Cardiac septum (tissue), 1 donor: ENCODE measurements at regions of chr12 and their contacts with region 1.

Region 1: GRCh38 chr12:14769969-14770495 is 33.2 kb downstream of the WBP11 start:
- DNase-seq: peak; percentile 92

Region 2: GRCh38 chr12:14394317-14395073 is 375.5 kb before region 1 on chr12:
- intact Hi-C with region 1: loop called (anchors 10 kb)
- DNase-seq: no peak

Region 3: GRCh38 chr12:14665354-14666348 is 104.4 kb before region 1 on chr12:
- intact Hi-C with region 1: no loop called
- DNase-seq: no peak

Region 4: DNA sequence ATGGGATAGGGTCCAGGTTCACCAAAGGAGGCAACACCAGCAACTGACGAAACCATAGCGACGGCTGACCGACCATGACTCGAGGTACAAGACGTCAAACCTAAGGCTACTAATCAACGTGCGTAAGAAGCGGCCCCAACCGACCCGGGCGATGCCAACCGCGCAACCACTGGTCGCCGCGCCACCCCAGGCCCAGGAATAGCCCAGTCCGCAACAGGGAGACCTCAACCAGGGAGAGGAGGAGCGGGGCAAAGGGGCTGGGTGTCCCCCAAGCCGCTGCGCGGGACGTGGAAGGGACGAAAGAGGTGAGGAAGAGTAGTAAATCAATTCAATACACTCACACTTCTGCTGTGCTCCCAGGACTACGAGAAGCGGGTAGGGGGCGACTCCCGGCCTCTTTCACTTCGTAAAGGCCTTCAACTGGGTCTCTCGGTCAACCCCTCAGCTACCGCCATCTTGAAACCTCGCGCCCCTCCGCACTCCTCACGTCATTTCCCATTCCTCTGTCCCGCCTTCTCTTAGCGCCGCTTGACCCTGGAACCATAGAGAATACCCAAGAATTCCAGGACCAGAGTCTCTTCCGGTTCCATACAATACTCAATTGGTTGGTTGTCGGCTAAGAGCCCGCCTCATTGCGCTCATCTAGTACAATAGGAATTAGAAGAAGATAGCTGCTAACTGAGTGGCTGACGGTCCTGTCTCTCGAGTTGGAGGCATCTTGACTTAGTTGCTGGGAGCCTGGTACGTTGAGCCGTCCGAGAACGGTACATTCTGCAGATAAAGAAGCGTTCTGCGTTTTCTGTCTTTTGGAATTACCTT is 33.2 kb after region 1 on chr12 and contains the starts of genes C12orf60 and WBP11:
- intact Hi-C with region 1: loop called (anchors 1 kb)
- DNase-seq: peak; percentile 95
- total RNA-seq, gene C12orf60: 2.5 TPM
- total RNA-seq, gene WBP11: 51.7 TPM

Region 5: DNA sequence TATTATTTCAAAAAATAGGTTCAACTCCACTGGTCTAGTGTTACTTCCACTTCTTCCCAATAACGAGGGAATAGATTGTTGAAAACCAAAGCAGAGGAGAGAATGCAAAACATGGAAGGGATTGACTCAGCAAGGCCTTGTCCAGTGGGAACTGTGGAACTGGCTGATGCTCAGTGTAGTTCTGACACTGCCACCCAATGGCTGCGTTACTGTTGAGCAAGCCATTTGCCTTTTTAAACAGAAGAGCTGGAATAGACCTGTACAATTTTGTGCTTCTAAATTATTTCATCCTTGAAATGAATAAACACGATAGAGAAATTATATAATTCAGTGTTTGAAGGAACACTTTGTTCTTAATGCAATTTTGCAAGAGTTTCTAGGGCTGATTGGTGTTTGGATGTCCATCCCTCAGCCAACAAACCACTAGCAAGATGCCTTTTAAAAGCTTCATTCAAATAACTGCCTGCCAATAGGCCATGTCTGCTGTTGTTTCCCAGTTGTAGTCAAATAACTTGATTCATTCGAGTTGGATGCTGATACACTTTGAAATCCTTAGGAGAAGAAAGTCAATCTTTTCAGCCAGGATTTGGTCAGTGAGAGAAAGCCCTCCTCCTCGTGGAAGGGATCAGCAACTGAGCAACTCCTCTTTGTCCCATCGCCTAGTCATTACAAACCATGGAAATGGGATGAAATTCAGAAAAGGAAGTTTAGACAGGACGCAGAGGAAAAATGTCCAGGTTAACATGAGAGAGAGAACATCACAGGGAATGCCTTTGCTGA is 122.9 kb after region 1 on chr12:
- intact Hi-C with region 1: loop called (anchors 10 kb)
- DNase-seq: no peak

Region 6: DNA sequence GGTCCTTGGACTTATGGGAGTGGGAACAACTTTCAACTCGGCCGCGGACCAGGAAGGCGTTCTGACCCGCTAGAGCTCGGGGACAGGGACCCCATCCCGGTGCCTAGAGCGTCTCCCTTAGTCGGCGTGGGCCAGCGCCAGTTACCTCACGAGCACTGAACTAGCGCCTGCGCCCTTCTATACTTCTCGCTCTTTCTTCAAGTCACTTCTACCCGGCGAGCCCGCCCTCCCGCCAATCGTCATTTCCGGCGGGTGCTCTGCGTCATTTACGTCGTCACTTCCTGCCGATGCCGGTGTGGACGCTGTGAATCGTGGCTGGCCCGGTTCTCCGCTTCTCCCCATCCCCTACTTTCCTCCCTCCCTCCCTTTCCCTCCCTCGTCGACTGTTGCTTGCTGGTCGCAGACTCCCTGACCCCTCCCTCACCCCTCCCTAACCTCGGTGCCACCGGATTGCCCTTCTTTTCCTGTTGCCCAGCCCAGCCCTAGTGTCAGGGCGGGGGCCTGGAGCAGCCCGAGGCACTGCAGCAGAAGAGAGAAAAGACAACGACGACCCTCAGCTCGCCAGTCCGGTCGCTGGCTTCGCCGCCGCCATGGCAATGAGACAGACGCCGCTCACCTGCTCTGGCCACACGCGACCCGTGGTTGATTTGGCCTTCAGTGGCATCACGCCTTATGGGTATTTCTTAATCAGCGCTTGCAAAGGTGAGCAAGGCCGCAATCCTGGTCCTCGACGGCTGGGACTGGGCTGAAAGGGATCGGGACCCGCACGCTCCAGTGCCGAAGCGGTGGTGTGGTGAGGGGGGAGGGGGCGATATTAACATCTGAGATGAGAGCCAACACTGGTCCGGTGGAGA is 1112.3 kb after region 1 on chr12 and contains the start of gene STRAP:
- intact Hi-C with region 1: loop called (anchors 10 kb)
- DNase-seq: peak; percentile 98
- total RNA-seq, gene STRAP: 102 TPM